ENCODE measurements at regions of chr15 and their contacts with region 1.

Region 1: DNA sequence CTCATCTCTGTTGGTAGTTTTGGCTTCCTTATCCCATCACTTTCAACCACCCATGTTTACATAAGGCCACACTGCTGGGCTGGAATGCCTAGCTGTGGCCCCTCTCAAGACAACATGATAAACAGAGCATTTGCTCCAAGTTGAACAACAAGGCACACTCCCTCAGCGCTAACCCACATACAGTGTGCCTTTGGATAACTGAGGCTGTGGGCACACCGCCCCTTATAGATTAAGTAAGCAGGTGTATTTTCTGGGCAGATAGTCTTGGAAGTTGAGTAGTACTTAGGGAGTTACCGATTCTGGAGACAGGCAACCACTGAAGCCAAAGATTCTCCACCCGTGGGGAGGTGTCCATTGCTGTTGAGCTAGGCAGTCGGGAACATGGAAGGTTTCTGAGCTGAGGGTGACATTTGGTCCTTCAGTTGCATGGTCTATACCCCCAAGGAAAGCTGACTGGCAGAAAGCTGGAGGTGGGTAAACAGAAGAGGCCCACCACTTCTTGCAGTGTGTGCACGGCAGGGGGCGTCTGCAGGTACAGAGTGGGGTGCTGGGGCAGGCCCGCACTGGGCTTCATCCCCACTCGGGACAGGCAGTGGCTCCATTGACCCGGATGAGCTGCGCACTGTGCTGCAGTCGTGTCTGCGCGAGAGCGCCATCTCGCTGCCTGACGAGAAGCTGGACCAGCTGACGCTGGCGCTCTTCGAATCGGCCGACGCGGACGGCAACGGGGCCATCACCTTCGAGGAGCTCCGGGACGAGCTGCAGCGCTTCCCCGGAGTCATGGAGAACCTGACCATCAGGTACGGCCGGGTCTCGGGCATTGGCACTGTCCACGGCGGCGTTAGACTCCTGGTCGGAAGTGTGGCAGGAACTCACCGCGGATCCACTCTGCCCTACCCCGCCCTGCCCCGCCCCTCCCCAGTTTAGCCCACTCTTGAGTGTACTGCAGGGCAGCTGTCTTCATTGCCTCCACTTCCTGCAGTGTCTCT is 16.8 kb downstream of the NOX5 start:
- DNase-seq: peak; percentile 53 to 81
- H3K4me3 ChIP-seq: peak overlapping the region in 2 of 4 experiments; percentile 23 to 50; a peak in 5 of 8 replicates
- H3K27ac ChIP-seq: no peak overlapping the region
- H3K4me1 ChIP-seq: peaks cover 0 to 4% (median 1%) of the 10 kb centered on the region in 4 experiments; a peak in 3 of 7 replicates
- H3K27me3 ChIP-seq: peaks cover 0 to 8% (median 0%) of the 10 kb centered on the region in 4 experiments; a peak in 3 of 7 replicates
- CTCF ChIP-seq: peak; percentile 84 to 92 (median 91)
- EP300 ChIP-seq: peak in 1 of 2 experiments; percentile 34; a peak in 1 of 3 replicates
- POLR2A ChIP-seq: no peak
- RAD21 ChIP-seq: peak; percentile 70 to 80

Region 2: GRCh38 chr15:69000725-69001503 is 30.4 kb before region 1 on chr15:
- CTCF ChIA-PET with region 1: interaction called, 13 read pairs
- POLR2A ChIA-PET with region 1: no interaction called
- DNase-seq: no peak
- H3K4me3 ChIP-seq: no peak overlapping the region
- H3K27ac ChIP-seq: no peak overlapping the region
- H3K4me1 ChIP-seq: peaks cover 2 to 16% (median 9%) of the 10 kb centered on the region in 4 experiments
- H3K27me3 ChIP-seq: no peaks in the 10 kb centered on the region
- CTCF ChIP-seq: no peak
- EP300 ChIP-seq: no peak
- POLR2A ChIP-seq: no peak
- RAD21 ChIP-seq: no peak

Region 3: GRCh38 chr15:69009341-69009740 is 22.0 kb before region 1 on chr15:
- CTCF ChIA-PET with region 1: interaction called, 27 read pairs
- POLR2A ChIA-PET with region 1: no interaction called
- DNase-seq: no peak
- H3K4me3 ChIP-seq: no peak overlapping the region
- H3K27ac ChIP-seq: no peak overlapping the region
- H3K4me1 ChIP-seq: no peaks in the 10 kb centered on the region
- H3K27me3 ChIP-seq: no peaks in the 10 kb centered on the region
- CTCF ChIP-seq: no peak
- EP300 ChIP-seq: no peak
- POLR2A ChIP-seq: no peak
- RAD21 ChIP-seq: no peak

Region 4: GRCh38 chr15:69014454-69014853 is 16.9 kb before region 1 on chr15 and contains the start of gene NOX5:
- CTCF ChIA-PET with region 1: interaction called, 27 read pairs
- POLR2A ChIA-PET with region 1: no interaction called
- DNase-seq: peak in 1 of 2 experiments; percentile 27
- H3K4me3 ChIP-seq: no peak within 1 kb of the TSS
- H3K27ac ChIP-seq: no peak within 1 kb of the TSS
- H3K4me1 ChIP-seq: 0 out of 7 replicates have a peak, but pooled peaks cover 0 to 3% (median 0%) of the 10 kb centered on the region in 4 experiments
- H3K27me3 ChIP-seq: no peaks in the 10 kb centered on the region; a peak in 1 of 7 replicates
- CTCF ChIP-seq: no peak
- EP300 ChIP-seq: no peak
- POLR2A ChIP-seq: no peak
- RAD21 ChIP-seq: no peak
- total RNA-seq, gene NOX5: not detected in 2 replicates

Region 5: GRCh38 chr15:69045808-69046207 is 14.5 kb after region 1 on chr15:
- CTCF ChIA-PET with region 1: interaction called, 28 read pairs
- POLR2A ChIA-PET with region 1: no interaction called
- DNase-seq: no peak
- H3K4me3 ChIP-seq: no peak overlapping the region
- H3K27ac ChIP-seq: no peak overlapping the region
- H3K4me1 ChIP-seq: peaks cover 0 to 2% (median 1%) of the 10 kb centered on the region in 4 experiments; a peak in 1 of 7 replicates
- H3K27me3 ChIP-seq: no peaks in the 10 kb centered on the region; a peak in 2 of 7 replicates
- CTCF ChIP-seq: peak in 2 of 3 experiments; percentile 15 to 22; a peak in 2 of 4 replicates
- EP300 ChIP-seq: no peak
- POLR2A ChIP-seq: no peak
- RAD21 ChIP-seq: peak in 1 of 2 experiments; percentile 15; a peak in 1 of 4 replicates

Region 6: GRCh38 chr15:69170597-69170996 is 139.3 kb after region 1 on chr15:
- CTCF ChIA-PET with region 1: no interaction called
- POLR2A ChIA-PET with region 1: no interaction called
- DNase-seq: no peak
- H3K4me3 ChIP-seq: no peak overlapping the region
- H3K27ac ChIP-seq: no peak overlapping the region
- H3K4me1 ChIP-seq: no peaks in the 10 kb centered on the region
- H3K27me3 ChIP-seq: no peaks in the 10 kb centered on the region
- CTCF ChIP-seq: no peak
- EP300 ChIP-seq: no peak
- POLR2A ChIP-seq: no peak
- RAD21 ChIP-seq: no peak